Colonic mucosa (tissue), 4 donors: ENCODE measurements at regions of chr1 and their contacts with region 1.

Region 1: GRCh38 chr1:173429471-173430402 is 47.4 kb upstream of the PRDX6 start:
- DNase-seq: peak; percentile 87
- H3K4me3 ChIP-seq: no peak overlapping the region
- H3K27ac ChIP-seq: peak overlapping the region; percentile 79
- H3K4me1 ChIP-seq: peaks cover 4% of the 10 kb centered on the region
- H3K27me3 ChIP-seq: no peaks in the 10 kb centered on the region
- CTCF ChIP-seq: peak; percentile 62

Region 2: GRCh38 chr1:173473599-173474011 is 43.9 kb after region 1 on chr1:
- intact Hi-C with region 1: loop called (anchors 5 kb)
- DNase-seq: no peak
- H3K4me3 ChIP-seq: no peak overlapping the region
- H3K27ac ChIP-seq: peak overlapping the region; percentile 95
- H3K4me1 ChIP-seq: peaks cover 4% of the 10 kb centered on the region
- H3K27me3 ChIP-seq: no peaks in the 10 kb centered on the region
- CTCF ChIP-seq: no peak

Region 3: DNA sequence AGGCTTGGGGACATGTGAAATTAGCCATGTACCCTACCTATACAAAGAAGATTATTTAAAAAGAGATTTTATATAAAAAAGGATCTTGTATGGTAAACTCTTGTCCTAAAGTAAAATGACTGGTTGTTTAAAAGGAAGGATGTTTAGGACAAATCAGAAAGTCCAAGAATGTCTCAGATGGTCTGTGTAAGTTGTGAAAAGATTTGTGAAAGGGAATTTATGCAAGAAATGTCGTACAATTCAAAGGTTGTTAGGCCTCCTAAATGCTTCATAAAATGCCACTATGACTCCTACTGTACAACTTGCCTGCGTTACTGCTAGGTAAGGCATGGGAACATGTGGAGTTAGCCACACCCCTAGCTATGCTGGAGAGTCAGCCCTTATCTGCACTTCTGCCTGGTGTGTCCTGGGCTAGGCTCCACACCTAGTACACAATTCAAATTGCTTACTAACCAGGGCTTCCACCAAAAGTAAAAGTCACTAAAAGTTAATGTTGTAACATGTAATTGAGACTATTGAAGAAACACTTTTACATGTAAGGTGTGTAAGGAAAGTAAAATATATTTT is 67.1 kb after region 1 on chr1:
- intact Hi-C with region 1: no loop called
- DNase-seq: no peak
- H3K4me3 ChIP-seq: no peak overlapping the region
- H3K27ac ChIP-seq: no peak overlapping the region
- H3K4me1 ChIP-seq: no peaks in the 10 kb centered on the region
- H3K27me3 ChIP-seq: no peaks in the 10 kb centered on the region
- CTCF ChIP-seq: no peak

Region 4: DNA sequence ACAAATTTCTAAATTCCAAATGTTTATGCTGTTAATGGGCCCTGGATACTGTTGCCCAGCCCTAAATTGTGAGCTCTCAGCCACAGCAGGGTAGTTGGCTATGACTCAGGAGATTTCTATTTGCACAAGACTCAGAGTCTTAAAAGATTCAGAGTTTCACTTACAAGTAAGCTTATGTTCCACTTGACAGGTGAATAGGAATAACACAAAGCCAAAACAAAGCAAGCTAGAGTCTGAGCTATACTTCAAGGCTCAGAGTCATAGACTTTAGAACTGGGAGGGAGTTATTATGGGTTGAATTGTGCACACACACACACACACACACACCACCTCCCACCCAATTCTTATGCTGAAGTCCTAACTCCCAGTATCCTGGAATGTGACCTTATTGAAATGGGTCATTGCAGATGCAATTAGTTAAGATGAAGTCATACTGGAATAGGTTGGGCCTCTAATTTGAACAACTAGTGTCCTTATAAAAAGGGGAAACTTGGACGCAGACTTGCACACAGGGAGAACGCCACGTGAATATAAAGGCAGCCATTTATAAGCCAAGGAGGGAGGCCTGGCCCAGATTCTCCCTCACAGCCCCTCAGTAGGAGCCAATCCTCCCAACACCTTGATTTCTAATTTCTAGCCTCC is 77.6 kb after region 1 on chr1:
- intact Hi-C with region 1: loop called (anchors 5 kb)
- DNase-seq: no peak
- H3K4me3 ChIP-seq: no peak overlapping the region
- H3K27ac ChIP-seq: peak overlapping the region; percentile 17
- H3K4me1 ChIP-seq: no peaks in the 10 kb centered on the region
- H3K27me3 ChIP-seq: no peaks in the 10 kb centered on the region
- CTCF ChIP-seq: no peak

Region 5: DNA sequence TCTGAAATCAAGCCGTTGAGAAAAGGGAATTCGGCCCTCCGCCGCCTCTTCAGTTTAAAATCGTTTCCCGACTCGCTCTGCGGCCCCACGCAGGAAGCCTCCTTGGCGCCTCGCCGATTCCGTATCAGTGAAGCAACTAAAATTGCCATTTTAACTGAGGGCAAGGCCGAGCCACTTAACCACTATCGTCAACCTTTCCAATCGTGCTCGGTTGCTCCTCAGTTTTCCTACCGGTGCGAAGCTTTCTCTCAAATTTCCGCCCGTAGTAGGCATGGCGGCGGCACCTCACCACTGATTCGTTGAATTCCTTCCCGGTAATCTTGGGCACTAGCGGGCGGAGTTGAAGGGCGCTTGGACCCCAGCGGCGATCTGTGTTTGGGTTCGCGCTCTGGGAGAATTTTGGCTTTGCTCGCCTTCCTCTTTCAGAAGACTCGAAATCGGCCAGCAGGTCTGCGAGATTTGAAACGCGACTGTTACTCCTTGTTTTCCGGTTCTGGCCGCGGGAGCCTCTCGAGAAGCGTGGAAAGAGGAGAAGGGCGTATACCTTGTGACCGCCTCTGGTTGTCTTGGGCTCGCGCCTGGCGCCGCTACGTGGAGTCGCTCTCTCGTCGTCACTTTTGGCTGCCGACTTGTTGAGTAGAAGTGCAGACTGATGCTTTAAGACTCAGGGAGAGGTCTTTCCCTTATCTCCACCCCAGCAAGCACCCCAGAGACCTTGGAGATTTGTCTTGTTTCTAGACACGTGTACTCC is 394.8 kb after region 1 on chr1 and contains the starts of genes CENPL and DARS2:
- intact Hi-C with region 1: loop called (anchors 5 kb)
- DNase-seq: peak; percentile 97
- H3K4me3 ChIP-seq: peak within 1 kb of the TSS; percentile 72
- H3K27ac ChIP-seq: peak within 1 kb of the TSS; percentile 86
- H3K4me1 ChIP-seq: peaks cover 3% of the 10 kb centered on the region
- H3K27me3 ChIP-seq: no peaks in the 10 kb centered on the region
- CTCF ChIP-seq: no peak
- total RNA-seq, gene CENPL: 5.7 to 13.6 TPM
- total RNA-seq, gene DARS2: 24.8 to 51.9 TPM